Naive thymus-derived CD4-positive, alpha-beta T cell (primary cell): ENCODE measurements at regions of chr6 and their contacts with region 1.

Region 1: DNA sequence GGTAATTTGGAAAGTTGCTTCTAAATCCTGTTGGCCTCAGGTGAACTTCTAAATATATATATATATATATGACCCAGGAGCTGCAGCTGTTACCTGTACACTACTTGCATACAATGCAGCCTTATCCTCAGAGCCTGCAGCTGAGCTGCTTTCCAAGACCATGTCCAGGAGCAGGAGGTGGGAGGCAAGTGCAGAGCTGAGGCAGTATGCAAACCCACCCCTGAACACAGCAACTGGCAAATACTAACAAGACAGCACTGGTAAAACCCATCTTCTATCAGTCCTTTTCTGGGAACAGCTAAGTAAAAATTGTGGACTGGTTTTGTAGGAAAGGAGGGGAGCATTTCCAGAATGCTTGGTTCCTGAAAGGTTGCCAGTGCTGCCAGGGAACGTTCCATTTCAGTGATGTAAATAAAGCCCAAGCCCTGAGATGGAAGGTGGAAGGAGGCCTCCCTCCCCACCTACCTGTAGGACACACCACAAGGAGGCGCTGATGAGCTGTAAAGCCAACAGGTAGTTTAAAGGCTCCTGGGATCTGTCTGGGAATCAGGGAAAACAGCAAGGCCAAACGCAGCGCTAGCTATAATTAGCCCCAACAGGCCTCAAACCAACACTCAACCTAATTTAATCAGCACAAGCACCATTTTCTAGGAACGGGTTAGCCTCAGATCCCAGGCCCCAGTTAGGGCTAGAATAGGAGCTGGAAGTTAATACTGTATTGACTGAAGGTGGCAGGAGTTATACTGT is 93.8 kb upstream of the MAP7 start:
- DNase-seq: peak; percentile 47 to 77 (median 69)
- ATAC-seq: peak; percentile 84
- H3K4me3 ChIP-seq: no peak overlapping the region
- H3K4me3 Mint-ChIP-seq: no peak overlapping the region
- H3K27ac ChIP-seq: no peak overlapping the region
- H3K27ac Mint-ChIP-seq: peak overlapping the region in 3 of 9 donors; percentile 10 to 53 (median 31)
- H3K4me1 ChIP-seq: peaks cover 0 to 13% of the 10 kb centered on the region in 2 donors
- H3K4me1 Mint-ChIP-seq: peaks cover 0 to 8% (median 0%) of the 10 kb centered on the region in 7 donors
- H3K27me3 ChIP-seq: no peaks in the 10 kb centered on the region
- H3K27me3 Mint-ChIP-seq: no peaks in the 10 kb centered on the region

Region 2: GRCh38 chr6:136696238-136696637 is 52.2 kb after region 1 on chr6:
- CTCF ChIA-PET with region 1: interaction called, 4 read pairs
- POLR2A ChIA-PET with region 1: no interaction called
- intact Hi-C with region 1: loop called in 1 of 2 experiments (anchors 5 kb)
- DNase-seq: no peak
- ATAC-seq: no peak
- H3K4me3 ChIP-seq: no peak overlapping the region
- H3K4me3 Mint-ChIP-seq: no peak overlapping the region
- H3K27ac ChIP-seq: no peak overlapping the region
- H3K27ac Mint-ChIP-seq: no peak overlapping the region
- H3K4me1 ChIP-seq: peaks cover 0 to 5% of the 10 kb centered on the region in 2 donors
- H3K4me1 Mint-ChIP-seq: peaks cover 0 to 30% (median 12%) of the 10 kb centered on the region in 7 donors
- H3K27me3 ChIP-seq: no peaks in the 10 kb centered on the region
- H3K27me3 Mint-ChIP-seq: no peaks in the 10 kb centered on the region

Region 3: GRCh38 chr6:136737871-136738691 is 94.1 kb after region 1 on chr6:
- CTCF ChIA-PET with region 1: interaction called, 6 read pairs
- POLR2A ChIA-PET with region 1: no interaction called
- intact Hi-C with region 1: loop called in 1 of 2 experiments (anchors 5 kb)
- DNase-seq: no peak
- ATAC-seq: no peak
- H3K4me3 ChIP-seq: no peak overlapping the region
- H3K4me3 Mint-ChIP-seq: no peak overlapping the region
- H3K27ac ChIP-seq: no peak overlapping the region
- H3K27ac Mint-ChIP-seq: peak overlapping the region in 1 of 9 donors; percentile 19
- H3K4me1 ChIP-seq: peaks cover 0 to 6% of the 10 kb centered on the region in 2 donors
- H3K4me1 Mint-ChIP-seq: peaks cover 13 to 43% (median 21%) of the 10 kb centered on the region in 7 donors
- H3K27me3 ChIP-seq: no peaks in the 10 kb centered on the region
- H3K27me3 Mint-ChIP-seq: no peaks in the 10 kb centered on the region

Region 4: DNA sequence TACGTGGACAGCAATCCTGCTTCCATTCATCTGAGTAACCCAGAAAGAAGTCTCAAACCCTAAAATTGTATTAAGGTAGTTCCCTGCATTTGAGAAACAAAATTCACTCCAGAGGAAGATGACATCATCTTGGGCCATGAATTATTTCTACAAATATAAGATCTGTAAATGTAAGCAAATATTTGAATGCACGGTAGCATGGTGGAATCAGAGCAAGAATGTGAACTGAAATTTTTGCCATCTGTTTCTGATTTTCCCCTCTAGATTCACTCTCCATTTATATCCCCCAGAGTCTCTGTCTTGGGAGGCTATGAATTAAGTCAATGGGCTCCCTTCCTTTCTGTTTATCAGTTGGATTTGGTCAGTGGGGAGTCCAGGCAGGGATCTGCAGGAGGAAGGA is 154.0 kb after region 1 on chr6:
- CTCF ChIA-PET with region 1: interaction called, 274 read pairs
- POLR2A ChIA-PET with region 1: interaction called, 79 read pairs
- intact Hi-C with region 1: loop called (anchors 1 kb)
- DNase-seq: no peak
- ATAC-seq: no peak
- H3K4me3 ChIP-seq: no peak overlapping the region
- H3K4me3 Mint-ChIP-seq: no peak overlapping the region
- H3K27ac ChIP-seq: no peak overlapping the region
- H3K27ac Mint-ChIP-seq: no peak overlapping the region
- H3K4me1 ChIP-seq: peaks cover 5% of the 10 kb centered on the region in 2 donors
- H3K4me1 Mint-ChIP-seq: peaks cover 3 to 6% (median 5%) of the 10 kb centered on the region in 7 donors
- H3K27me3 ChIP-seq: no peaks in the 10 kb centered on the region
- H3K27me3 Mint-ChIP-seq: peaks cover 0 to 24% (median 6%) of the 10 kb centered on the region in 5 donors

Region 5: DNA sequence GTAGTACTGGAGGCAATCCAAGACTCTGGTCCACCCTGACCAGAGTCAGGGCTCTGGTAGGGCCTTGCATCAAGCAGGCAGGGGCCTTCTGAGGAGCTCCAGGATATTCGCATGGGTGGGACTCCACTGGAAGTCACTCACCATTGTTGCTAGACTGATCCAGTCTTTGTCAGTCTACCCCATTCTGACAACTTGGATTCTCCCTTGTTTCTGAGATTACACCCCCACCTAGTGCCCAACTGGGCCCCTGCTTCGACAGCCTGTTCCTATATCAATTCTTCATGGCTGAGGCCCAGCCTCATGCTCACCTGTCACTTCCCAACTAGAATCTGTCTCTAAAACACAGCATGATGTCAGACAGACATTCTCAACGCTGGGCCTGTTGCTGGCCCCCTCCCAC is 283.3 kb after region 1 on chr6:
- CTCF ChIA-PET with region 1: no interaction called
- POLR2A ChIA-PET with region 1: no interaction called
- intact Hi-C with region 1: loop called (anchors 1 to 10 kb)
- DNase-seq: peak in 2 of 9 donors; percentile 10 to 18
- ATAC-seq: peak; percentile 38
- H3K4me3 ChIP-seq: no peak overlapping the region
- H3K4me3 Mint-ChIP-seq: no peak overlapping the region
- H3K27ac ChIP-seq: no peak overlapping the region
- H3K27ac Mint-ChIP-seq: no peak overlapping the region
- H3K4me1 ChIP-seq: peaks cover 0 to 4% of the 10 kb centered on the region in 2 donors
- H3K4me1 Mint-ChIP-seq: peaks cover 0 to 12% (median 6%) of the 10 kb centered on the region in 7 donors
- H3K27me3 ChIP-seq: no peaks in the 10 kb centered on the region
- H3K27me3 Mint-ChIP-seq: peaks cover 36 to 65% (median 46%) of the 10 kb centered on the region in 5 donors

Region 6: GRCh38 chr6:137094411-137095008 is 450.5 kb after region 1 on chr6:
- CTCF ChIA-PET with region 1: no interaction called
- POLR2A ChIA-PET with region 1: no interaction called
- intact Hi-C with region 1: no loop called
- DNase-seq: peak in 8 of 9 donors; percentile 17 to 56 (median 40)
- ATAC-seq: peak; percentile 80
- H3K4me3 ChIP-seq: no peak overlapping the region
- H3K4me3 Mint-ChIP-seq: peak overlapping the region in 1 of 10 donors; percentile 33
- H3K27ac ChIP-seq: no peak overlapping the region
- H3K27ac Mint-ChIP-seq: peak overlapping the region in 1 of 9 donors; percentile 11
- H3K4me1 ChIP-seq: peaks cover 0 to 3% of the 10 kb centered on the region in 2 donors
- H3K4me1 Mint-ChIP-seq: peaks cover 0 to 44% (median 0%) of the 10 kb centered on the region in 7 donors
- H3K27me3 ChIP-seq: no peaks in the 10 kb centered on the region
- H3K27me3 Mint-ChIP-seq: peaks cover 0 to 10% (median 0%) of the 10 kb centered on the region in 5 donors

Region 7: GRCh38 chr6:137271245-137272183 is 627.5 kb after region 1 on chr6:
- CTCF ChIA-PET with region 1: no interaction called
- POLR2A ChIA-PET with region 1: no interaction called
- intact Hi-C with region 1: no loop called
- DNase-seq: peak in 5 of 9 donors; percentile 8 to 41 (median 27)
- ATAC-seq: peak; percentile 76
- H3K4me3 ChIP-seq: no peak overlapping the region
- H3K4me3 Mint-ChIP-seq: no peak overlapping the region
- H3K27ac ChIP-seq: no peak overlapping the region
- H3K27ac Mint-ChIP-seq: no peak overlapping the region
- H3K4me1 ChIP-seq: peaks cover 0 to 16% of the 10 kb centered on the region in 2 donors
- H3K4me1 Mint-ChIP-seq: peaks cover 0 to 7% (median 0%) of the 10 kb centered on the region in 7 donors
- H3K27me3 ChIP-seq: no peaks in the 10 kb centered on the region
- H3K27me3 Mint-ChIP-seq: peaks cover 5 to 38% (median 6%) of the 10 kb centered on the region in 5 donors